HEK293 (cell line): ENCODE measurements at regions of chr1 and their contacts with region 1.

Region 1: GRCh38 chr1:240619906-240620621 is 8.1 kb upstream of the GREM2 start:
- H3K4me3 ChIP-seq: no peak overlapping the region
- H3K27ac ChIP-seq: no peak overlapping the region
- H3K4me1 ChIP-seq: no peaks in the 10 kb centered on the region
- CTCF ChIP-seq: no peak

Region 2: GRCh38 chr1:240608707-240609106 is 11.4 kb before region 1 on chr1:
- CTCF ChIA-PET with region 1: interaction called, 19 read pairs
- POLR2A ChIA-PET with region 1: no interaction called
- H3K4me3 ChIP-seq: no peak overlapping the region
- H3K27ac ChIP-seq: no peak overlapping the region
- H3K4me1 ChIP-seq: peaks cover 21% of the 10 kb centered on the region
- CTCF ChIP-seq: peak; percentile 47

Region 3: GRCh38 chr1:240691521-240692338 is 71.7 kb after region 1 on chr1:
- CTCF ChIA-PET with region 1: interaction called, 14 read pairs
- POLR2A ChIA-PET with region 1: no interaction called
- H3K4me3 ChIP-seq: no peak overlapping the region
- H3K27ac ChIP-seq: no peak overlapping the region
- H3K4me1 ChIP-seq: no peaks in the 10 kb centered on the region
- CTCF ChIP-seq: peak; percentile 97